Upper lobe of right lung (tissue), 1 donor: ENCODE measurements at regions of chr3 and their contacts with region 1.

Region 1: DNA sequence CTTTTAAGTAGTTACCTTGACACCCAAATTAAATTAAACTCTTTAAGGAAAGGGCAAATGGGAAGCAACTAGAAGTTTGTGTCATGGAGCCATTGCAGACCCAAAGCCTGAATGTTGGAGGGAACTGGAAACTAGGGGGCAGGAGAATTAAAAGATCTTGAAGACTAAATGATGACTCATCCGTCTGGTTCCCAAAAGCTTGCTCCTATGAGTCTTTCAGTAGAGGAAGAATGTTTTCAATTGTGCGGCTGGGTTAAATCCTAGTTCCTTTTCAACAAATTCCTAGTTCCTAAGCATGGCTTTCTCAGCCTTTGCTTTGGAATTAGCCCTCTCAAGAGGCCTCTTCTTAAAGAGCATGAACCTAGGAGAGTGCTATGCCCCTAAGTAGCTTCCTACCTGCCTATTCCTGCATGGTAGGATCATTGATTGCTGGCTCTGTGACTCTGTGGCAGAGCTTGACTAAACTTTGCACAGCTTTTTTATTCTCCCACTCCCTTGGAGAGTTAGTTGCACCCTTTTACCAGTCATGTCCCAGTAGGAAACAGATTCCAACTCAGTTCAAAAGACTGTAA is 17.7 kb downstream of the CLEC3B start:
- DNase-seq: no peak
- ATAC-seq: peak; percentile 54
- H3K4me3 ChIP-seq: no peak overlapping the region
- H3K27ac ChIP-seq: peak overlapping the region; percentile 6
- H3K4me1 ChIP-seq: peaks cover 3% of the 10 kb centered on the region
- H3K27me3 ChIP-seq: no peaks in the 10 kb centered on the region
- CTCF ChIP-seq: no peak

Region 2: DNA sequence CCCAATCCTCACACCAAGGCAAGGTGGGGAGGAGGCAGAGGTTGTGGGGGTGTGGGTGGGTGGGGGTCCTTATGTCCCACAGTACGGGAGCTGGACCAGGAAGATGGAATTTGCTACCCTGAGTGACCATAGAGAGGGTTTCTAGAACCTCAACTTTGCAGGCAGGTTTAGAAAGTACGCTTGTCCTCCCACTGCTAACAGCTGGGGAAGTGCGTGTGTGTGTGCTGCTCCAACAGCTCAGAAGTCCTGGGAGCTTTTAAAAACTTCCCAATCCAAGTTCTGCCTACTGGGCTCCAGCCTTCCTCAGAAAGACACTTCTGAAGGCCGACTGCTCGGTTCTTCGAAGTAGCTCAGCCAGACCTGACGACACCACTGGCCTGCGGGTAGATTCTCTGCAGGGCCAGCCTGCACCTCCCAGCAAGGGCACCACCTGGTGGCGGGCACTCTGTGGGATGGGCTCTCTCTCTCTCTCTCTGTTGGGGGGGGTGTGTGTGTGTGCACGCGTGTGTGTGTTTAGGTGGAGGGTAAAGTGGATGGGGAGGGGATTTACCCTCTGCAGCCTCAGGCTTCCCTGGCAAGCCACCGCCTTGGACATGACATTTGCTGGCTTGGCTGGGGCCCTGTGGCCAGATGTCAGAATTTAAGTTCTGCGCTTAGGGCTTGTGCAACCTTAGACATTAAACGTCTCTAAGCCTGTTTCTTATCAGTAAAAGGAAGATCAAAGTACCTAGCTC is 166.7 kb after region 1 on chr3:
- intact Hi-C with region 1: loop called (anchors 5 kb)
- DNase-seq: peak; percentile 93
- ATAC-seq: peak; percentile 99
- H3K4me3 ChIP-seq: no peak overlapping the region
- H3K27ac ChIP-seq: no peak overlapping the region
- H3K4me1 ChIP-seq: peaks cover 4% of the 10 kb centered on the region
- H3K27me3 ChIP-seq: no peaks in the 10 kb centered on the region
- CTCF ChIP-seq: peak; percentile 72